Endothelial cell of umbilical vein (primary cell): ENCODE measurements at regions of chr2 and their contacts with region 1.

Region 1: DNA sequence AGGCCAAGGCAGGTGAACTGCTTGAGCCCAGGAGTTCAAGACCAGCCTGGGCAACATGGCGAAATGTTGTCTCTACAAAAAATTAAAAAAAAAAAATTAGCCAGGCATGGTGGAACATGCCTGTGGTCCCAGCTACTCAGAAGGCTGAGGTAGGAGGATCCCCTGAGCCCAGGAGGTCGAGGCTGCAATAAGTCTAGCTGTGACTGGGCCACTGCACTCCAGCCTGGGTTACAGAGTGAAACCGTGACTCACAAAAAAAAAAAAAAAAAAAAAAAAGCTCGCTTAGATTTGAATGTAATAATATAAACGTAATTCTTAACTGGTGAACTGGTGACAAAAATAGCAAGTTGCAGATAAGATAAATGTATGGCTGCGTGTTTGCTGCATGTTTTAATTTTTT is 56.5 kb downstream of the TFCP2L1 start:
- DNase-seq: no peak
- H3K4me3 ChIP-seq: no peak overlapping the region
- H3K27ac ChIP-seq: no peak overlapping the region
- H3K4me1 ChIP-seq: no peaks in the 10 kb centered on the region
- H3K27me3 ChIP-seq: no peaks in the 10 kb centered on the region
- CTCF ChIP-seq: no peak
- POLR2A ChIP-seq: no peak

Region 2: DNA sequence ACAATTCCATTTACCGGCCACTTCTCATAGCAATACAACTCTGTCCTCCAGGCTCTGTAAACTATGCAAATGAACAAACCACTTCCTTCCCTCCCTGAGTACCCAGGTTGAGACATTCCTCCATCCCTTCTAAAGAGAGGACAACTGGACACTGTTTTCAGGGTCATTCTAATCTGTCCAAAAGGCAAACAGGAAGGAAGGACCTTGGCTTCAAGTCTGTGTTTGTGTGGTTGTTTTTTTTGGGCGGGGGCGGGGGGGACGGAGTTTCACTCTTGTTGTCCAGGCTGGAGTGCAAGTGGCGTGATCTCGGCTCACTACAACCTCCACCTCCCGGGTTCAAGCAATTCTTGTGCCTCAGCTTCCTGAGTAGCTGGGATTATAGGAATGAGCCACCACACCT is 53.2 kb after region 1 on chr2:
- CTCF ChIA-PET with region 1: no interaction called
- POLR2A ChIA-PET with region 1: interaction called, 10 read pairs
- dilution Hi-C with region 1: no loop called
- intact Hi-C with region 1: no loop called
- DNase-seq: no peak
- H3K4me3 ChIP-seq: no peak overlapping the region
- H3K27ac ChIP-seq: no peak overlapping the region
- H3K4me1 ChIP-seq: no peaks in the 10 kb centered on the region
- H3K27me3 ChIP-seq: peaks cover 27 to 33% of the 10 kb centered on the region in 2 experiments
- CTCF ChIP-seq: no peak
- POLR2A ChIP-seq: no peak